Heart right ventricle (tissue), 16 donors: ENCODE measurements at regions of chr17 and their contacts with region 1.

Region 1: DNA sequence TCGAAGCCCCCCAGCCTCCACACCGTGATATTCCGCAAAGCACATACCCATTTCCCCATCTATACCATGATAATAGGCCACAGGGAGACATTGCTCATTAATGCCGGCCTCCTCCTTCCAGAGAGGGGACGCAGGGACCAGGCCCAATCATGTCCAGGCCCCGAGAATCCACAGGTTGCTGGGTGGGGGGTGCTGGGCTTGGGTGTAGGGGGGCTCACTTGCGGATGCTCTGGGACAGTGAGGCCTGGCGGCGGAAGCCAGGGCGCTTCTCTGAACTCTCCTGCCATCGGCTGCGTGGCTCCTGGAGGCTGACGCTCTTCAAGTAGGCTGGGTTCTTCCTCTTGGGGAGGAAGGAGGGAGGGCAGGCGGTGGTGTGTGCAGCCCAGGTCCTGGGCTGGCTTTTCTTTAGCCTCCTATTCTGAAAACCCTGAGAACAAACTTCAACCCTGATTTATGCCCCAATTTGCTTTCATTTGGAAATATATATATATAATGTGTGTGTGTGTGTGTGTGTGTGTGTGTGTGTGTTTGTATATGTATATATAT is 12.2 kb downstream of the AANAT start:
- DNase-seq: no peak
- ATAC-seq: no peak
- H3K4me3 ChIP-seq: no peak overlapping the region
- H3K27ac ChIP-seq: no peak overlapping the region
- H3K4me1 ChIP-seq: peaks cover 0 to 30% (median 0%) of the 10 kb centered on the region in 9 donors
- H3K27me3 ChIP-seq: no peaks in the 10 kb centered on the region
- CTCF ChIP-seq: no peak

Region 2: DNA sequence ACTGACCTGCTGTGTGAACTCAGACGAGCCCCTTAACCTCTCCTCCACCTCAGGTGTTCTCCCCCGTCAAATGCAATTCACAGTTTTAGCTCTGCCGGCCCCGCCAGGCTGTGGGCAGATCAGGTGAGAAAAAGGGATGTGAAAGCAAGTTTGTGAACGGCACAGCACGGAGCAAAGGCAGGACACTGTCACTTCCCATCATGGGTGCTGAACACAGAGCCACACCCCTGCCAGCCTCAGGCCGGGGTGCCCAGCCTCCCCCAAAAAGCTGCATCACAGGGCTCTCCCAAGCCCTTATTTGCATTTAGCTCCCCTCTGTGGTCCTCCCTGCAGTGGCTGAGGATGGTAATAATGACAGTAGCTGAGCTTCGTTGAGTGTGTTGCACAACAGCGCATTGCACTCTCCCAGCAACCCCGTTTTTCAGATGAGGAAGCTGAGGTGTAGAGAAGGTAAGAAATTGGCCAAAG is 1390.1 kb after region 1 on chr17:
- intact Hi-C with region 1: loop called in 1 of 10 experiments (anchors 5 kb)
- DNase-seq: peak in 1 of 2 donors; percentile 14
- ATAC-seq: peak in 2 of 8 donors; percentile 18 to 19
- H3K4me3 ChIP-seq: peak overlapping the region in 1 of 10 donors; percentile 14
- H3K27ac ChIP-seq: peak overlapping the region in 1 of 10 donors; percentile 74
- H3K4me1 ChIP-seq: peaks cover 0 to 35% (median 9%) of the 10 kb centered on the region in 9 donors
- H3K27me3 ChIP-seq: no peaks in the 10 kb centered on the region
- CTCF ChIP-seq: no peak